ENCODE measurements at regions of chr17 and their contacts with region 1.

Region 1: GRCh38 chr17:40909351-40909750 is 24.3 kb upstream of the KRT20 start:
- DNase-seq: peak in 4 of 5 donors; percentile 64 to 77 (median 68)
- ATAC-seq: peak; percentile 73 to 97 (median 90)
- H3K4me3 ChIP-seq: no peak overlapping the region
- H3K27ac ChIP-seq: no peak overlapping the region
- H3K4me1 ChIP-seq: peaks cover 0 to 14% (median 0%) of the 10 kb centered on the region in 12 donors
- H3K27me3 ChIP-seq: peaks cover 0 to 23% (median 7%) of the 10 kb centered on the region in 9 donors
- CTCF ChIP-seq: peak; percentile 50 to 80 (median 70)
- POLR2A ChIP-seq: no peak

Region 2: GRCh38 chr17:39351508-39351907 is 1557.8 kb before region 1 on chr17:
- intact Hi-C with region 1: no loop called
- DNase-seq: no peak
- ATAC-seq: no peak
- H3K4me3 ChIP-seq: no peak overlapping the region
- H3K27ac ChIP-seq: no peak overlapping the region
- H3K4me1 ChIP-seq: peaks cover 0 to 23% (median 14%) of the 10 kb centered on the region in 12 donors
- H3K27me3 ChIP-seq: no peaks in the 10 kb centered on the region
- CTCF ChIP-seq: no peak
- POLR2A ChIP-seq: no peak

Region 3: GRCh38 chr17:40818733-40819527 is 90.4 kb before region 1 on chr17:
- intact Hi-C with region 1: loop called in 1 of 10 experiments (anchors 10 kb)
- DNase-seq: peak; percentile 83 to 92 (median 85)
- ATAC-seq: peak; percentile 85 to 96 (median 92)
- H3K4me3 ChIP-seq: peak overlapping the region; percentile 52 to 95 (median 66)
- H3K27ac ChIP-seq: peak overlapping the region; percentile 82 to 97 (median 93)
- H3K4me1 ChIP-seq: peaks cover 0 to 31% (median 14%) of the 10 kb centered on the region in 12 donors
- H3K27me3 ChIP-seq: no peaks in the 10 kb centered on the region
- CTCF ChIP-seq: no peak
- POLR2A ChIP-seq: peak in 1 of 2 donors; percentile 71

Region 4: GRCh38 chr17:40850323-40850972 is 58.9 kb before region 1 on chr17:
- intact Hi-C with region 1: no loop called
- DNase-seq: no peak
- ATAC-seq: no peak
- H3K4me3 ChIP-seq: no peak overlapping the region
- H3K27ac ChIP-seq: no peak overlapping the region
- H3K4me1 ChIP-seq: no peaks in the 10 kb centered on the region
- H3K27me3 ChIP-seq: peaks cover 0 to 14% (median 0%) of the 10 kb centered on the region in 9 donors
- CTCF ChIP-seq: no peak
- POLR2A ChIP-seq: no peak

Region 5: GRCh38 chr17:40873255-40873654 is 36.1 kb before region 1 on chr17:
- intact Hi-C with region 1: no loop called
- DNase-seq: no peak
- ATAC-seq: no peak
- H3K4me3 ChIP-seq: no peak overlapping the region
- H3K27ac ChIP-seq: no peak overlapping the region
- H3K4me1 ChIP-seq: no peaks in the 10 kb centered on the region
- H3K27me3 ChIP-seq: peaks cover 0 to 19% (median 0%) of the 10 kb centered on the region in 9 donors
- CTCF ChIP-seq: no peak
- POLR2A ChIP-seq: no peak

Region 6: GRCh38 chr17:41211845-41212466 is 302.6 kb after region 1 on chr17:
- intact Hi-C with region 1: no loop called
- DNase-seq: no peak
- ATAC-seq: no peak
- H3K4me3 ChIP-seq: no peak overlapping the region
- H3K27ac ChIP-seq: no peak overlapping the region
- H3K4me1 ChIP-seq: no peaks in the 10 kb centered on the region
- H3K27me3 ChIP-seq: peaks cover 0 to 44% (median 7%) of the 10 kb centered on the region in 9 donors
- CTCF ChIP-seq: no peak
- POLR2A ChIP-seq: no peak

Region 7: DNA sequence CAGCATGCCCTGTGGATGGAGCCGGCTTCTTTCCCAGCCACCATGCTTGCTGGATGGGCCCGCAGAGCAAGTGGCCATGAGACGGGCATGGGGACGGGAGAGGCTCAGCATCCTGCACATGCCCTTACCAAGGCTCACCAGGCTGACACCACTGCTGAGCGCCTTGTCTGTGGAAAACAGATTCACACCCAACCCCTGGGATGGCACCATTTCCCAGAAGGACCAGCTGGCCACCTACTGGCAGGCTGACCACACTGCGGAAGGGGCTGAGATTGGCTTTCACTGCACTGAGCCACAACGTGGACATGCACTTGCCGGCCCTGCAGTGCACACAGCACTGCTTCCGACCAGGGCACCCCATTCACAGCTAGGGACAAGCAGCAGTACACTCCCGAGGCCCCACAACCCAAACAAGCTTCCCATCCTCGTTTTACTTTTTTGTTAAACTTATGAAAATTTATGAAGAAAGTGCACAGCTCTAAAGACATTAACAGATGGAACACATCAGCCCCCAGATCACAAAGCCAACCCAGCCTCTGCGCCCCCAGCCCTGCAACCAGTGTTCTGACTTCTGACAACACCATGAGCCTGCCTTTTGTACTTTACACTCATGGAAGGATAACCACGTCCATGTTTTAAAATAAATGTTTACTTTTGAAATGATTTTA is 420.1 kb after region 1 on chr17:
- intact Hi-C with region 1: loop called in 7 of 10 experiments (anchors 2 to 10 kb)
- DNase-seq: peak in 1 of 5 donors; percentile 44
- ATAC-seq: peak in 3 of 4 donors; percentile 29 to 58 (median 52)
- H3K4me3 ChIP-seq: no peak overlapping the region
- H3K27ac ChIP-seq: no peak overlapping the region
- H3K4me1 ChIP-seq: peaks cover 0 to under 1% (median 0%) of the 10 kb centered on the region in 12 donors
- H3K27me3 ChIP-seq: peaks cover 0 to 10% (median 0%) of the 10 kb centered on the region in 9 donors
- CTCF ChIP-seq: peak; percentile 26 to 60 (median 44)
- POLR2A ChIP-seq: no peak

Region 8: GRCh38 chr17:41548844-41549595 is 639.7 kb after region 1 on chr17:
- intact Hi-C with region 1: loop called in 9 of 10 experiments (anchors 1 to 10 kb)
- DNase-seq: peak; percentile 70 to 90 (median 77)
- ATAC-seq: peak; percentile 90 to 92 (median 90)
- H3K4me3 ChIP-seq: peak overlapping the region in 10 of 12 donors; percentile 18 to 42 (median 29)
- H3K27ac ChIP-seq: peak overlapping the region in 2 of 12 donors; percentile 10 to 54
- H3K4me1 ChIP-seq: peaks cover 0 to 20% (median 10%) of the 10 kb centered on the region in 12 donors
- H3K27me3 ChIP-seq: peaks cover 0 to 19% (median 2%) of the 10 kb centered on the region in 9 donors
- CTCF ChIP-seq: peak; percentile 78 to 93 (median 83)
- POLR2A ChIP-seq: no peak

Measured in heart left ventricle (tissue), 16 donors.